ENCODE measurements at regions of chr1 and their contacts with region 1.

Region 1: GRCh38 chr1:226062558-226063223 is at the start of gene H3-3A:
- DNase-seq: peak; percentile 99
- ATAC-seq: peak; percentile 85
- H3K4me3 Mint-ChIP-seq: peak within 1 kb of the TSS; percentile 99
- H3K27ac Mint-ChIP-seq: peak within 1 kb of the TSS; percentile 100
- H3K4me1 Mint-ChIP-seq: peaks cover 26% of the 10 kb centered on the region
- H3K27me3 Mint-ChIP-seq: no peaks in the 10 kb centered on the region
- total RNA-seq, gene H3-3A: 454 to 466 TPM

Region 2: DNA sequence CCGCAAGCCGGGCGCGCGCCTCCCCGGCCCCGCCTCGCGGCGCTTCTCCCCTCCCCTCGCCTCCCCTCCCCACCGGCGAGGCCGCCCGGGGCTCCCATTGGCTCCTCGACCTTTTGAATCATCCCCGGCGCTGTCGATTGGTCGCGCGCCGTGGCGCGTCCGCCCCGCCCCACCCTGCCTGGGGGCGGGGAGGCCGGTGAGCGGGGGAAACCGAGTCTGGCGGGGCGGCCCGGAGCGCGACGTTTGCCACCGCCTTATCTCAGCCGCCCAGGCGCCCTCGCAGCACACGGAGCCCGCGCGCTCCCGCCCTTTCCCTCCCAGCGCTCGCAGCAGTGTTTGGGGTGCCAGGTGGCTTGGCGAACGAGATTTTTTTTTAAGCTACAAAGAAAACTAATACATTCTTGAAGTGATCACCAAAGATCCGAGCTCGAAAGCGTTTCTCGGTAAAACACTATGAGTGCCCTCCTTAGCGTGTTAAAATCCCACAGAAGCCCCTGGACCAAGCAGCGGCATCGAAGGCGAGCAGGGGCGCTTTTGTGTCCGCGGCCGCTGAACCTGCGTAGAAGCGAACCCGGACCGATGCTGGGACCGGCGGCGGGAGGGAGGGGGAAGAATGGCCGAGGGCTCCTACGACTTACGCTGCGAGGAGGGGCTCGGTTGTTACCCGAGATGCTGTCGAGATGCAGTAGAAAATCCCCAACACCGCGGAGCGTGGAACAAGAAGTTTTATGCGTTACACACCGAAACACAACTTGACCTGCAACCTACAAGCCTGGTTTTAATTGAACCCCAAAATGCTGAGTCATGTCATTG is 634.4 kb before region 1 on chr1:
- POLR2A ChIA-PET with region 1: interaction called, 16 read pairs
- DNase-seq: peak; percentile 94
- ATAC-seq: peak; percentile 93
- H3K4me3 Mint-ChIP-seq: peak overlapping the region; percentile 87
- H3K27ac Mint-ChIP-seq: peak overlapping the region; percentile 89
- H3K4me1 Mint-ChIP-seq: peaks cover 43% of the 10 kb centered on the region
- H3K27me3 Mint-ChIP-seq: peaks cover 2% of the 10 kb centered on the region

Region 3: DNA sequence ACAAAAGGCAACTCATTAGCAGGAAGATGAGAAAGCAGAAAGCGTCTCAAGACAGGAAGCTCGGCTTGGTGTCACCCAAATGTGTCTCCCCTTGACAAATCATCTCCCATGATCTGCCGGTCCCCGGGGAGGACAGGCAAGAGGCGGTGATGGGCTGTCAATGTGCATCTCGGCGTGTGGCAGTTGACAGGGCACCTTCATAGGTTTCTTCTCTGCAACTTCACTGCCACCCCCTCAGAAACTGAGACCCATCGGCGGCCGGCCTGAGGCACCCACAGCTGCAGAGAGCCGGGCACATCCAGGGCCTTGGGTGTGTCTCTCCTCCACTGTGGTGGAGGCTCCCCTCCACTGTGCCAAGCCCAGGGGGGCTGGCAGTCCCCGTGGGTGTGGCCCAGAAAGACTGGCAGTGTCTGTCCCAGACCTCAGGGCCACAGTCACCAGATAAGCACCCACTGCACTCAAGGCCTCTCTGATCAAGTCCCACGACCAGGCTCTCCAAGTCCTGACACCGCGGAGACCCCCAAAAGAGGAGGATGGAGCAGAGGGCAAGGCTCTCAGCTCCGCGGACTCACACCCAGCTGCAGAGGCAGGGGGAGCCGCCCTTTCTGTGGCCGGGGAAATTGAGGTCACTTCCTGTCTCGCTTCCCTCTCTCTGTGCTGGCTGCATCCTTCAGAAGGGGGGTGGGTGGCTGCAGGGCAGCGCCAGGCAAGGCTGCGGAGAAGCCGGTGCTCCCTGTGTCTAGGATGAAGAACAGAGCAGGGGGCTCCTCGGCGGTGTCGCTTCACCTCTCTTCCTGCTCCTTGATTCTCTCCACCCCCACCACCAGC is 595.3 kb before region 1 on chr1:
- POLR2A ChIA-PET with region 1: interaction called, 27 read pairs
- DNase-seq: peak; percentile 84
- ATAC-seq: peak; percentile 87
- H3K4me3 Mint-ChIP-seq: peak overlapping the region; percentile 92
- H3K27ac Mint-ChIP-seq: peak overlapping the region; percentile 97
- H3K4me1 Mint-ChIP-seq: peaks cover 24% of the 10 kb centered on the region
- H3K27me3 Mint-ChIP-seq: no peaks in the 10 kb centered on the region

Region 4: GRCh38 chr1:226050133-226050532 is 12.6 kb before region 1 on chr1:
- POLR2A ChIA-PET with region 1: interaction called, 10 read pairs
- DNase-seq: no peak
- ATAC-seq: no peak
- H3K4me3 Mint-ChIP-seq: no peak overlapping the region
- H3K27ac Mint-ChIP-seq: no peak overlapping the region
- H3K4me1 Mint-ChIP-seq: no peaks in the 10 kb centered on the region
- H3K27me3 Mint-ChIP-seq: peaks cover 3% of the 10 kb centered on the region

Region 5: DNA sequence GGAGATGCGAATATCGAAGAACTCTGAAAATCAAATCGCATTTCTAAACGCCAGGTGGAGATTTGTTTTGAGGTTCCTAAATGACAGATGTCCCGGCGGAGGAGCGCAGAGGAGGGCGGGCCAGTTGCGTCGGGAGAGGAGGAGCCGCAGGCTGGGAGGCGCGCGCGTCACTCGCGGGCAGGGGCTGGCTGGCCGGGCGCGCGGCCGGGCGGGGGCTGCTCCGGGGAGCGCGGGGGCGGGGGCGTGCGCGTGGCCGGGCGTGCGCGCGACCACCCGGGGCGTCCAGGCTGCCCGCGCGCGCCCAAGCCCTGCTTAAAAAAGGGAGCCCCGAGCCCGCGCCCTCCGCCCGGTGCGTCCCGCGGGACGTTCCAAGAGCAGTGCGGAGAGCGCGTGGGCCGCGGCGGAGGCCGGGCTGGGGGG is 47.1 kb after region 1 on chr1:
- POLR2A ChIA-PET with region 1: interaction called, 36 read pairs
- DNase-seq: peak; percentile 86
- ATAC-seq: peak; percentile 82
- H3K4me3 Mint-ChIP-seq: peak overlapping the region; percentile 88
- H3K27ac Mint-ChIP-seq: peak overlapping the region; percentile 89
- H3K4me1 Mint-ChIP-seq: peaks cover 8% of the 10 kb centered on the region
- H3K27me3 Mint-ChIP-seq: peaks cover 3% of the 10 kb centered on the region

Region 6: DNA sequence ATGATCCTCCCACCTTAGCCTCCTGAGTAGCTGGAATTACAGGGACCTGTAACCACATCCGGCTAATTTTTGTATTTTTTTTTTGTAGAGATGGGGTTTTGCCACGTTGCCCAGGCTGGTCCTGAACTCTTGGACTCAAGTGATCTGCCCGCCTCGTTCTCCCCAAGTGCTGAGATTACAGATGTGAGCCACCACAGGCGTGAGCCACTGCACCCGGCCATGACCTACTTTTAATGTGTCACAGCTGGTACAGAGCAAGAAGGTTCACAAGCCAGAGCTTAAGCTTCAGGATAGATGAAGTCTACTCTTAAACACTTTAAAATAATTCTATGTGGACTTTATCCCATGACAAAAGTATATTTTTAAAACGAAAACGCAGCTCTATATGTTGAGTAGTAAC is 100.2 kb after region 1 on chr1:
- POLR2A ChIA-PET with region 1: no interaction called
- DNase-seq: no peak
- ATAC-seq: no peak
- H3K4me3 Mint-ChIP-seq: no peak overlapping the region
- H3K27ac Mint-ChIP-seq: no peak overlapping the region
- H3K4me1 Mint-ChIP-seq: peaks cover 16% of the 10 kb centered on the region
- H3K27me3 Mint-ChIP-seq: no peaks in the 10 kb centered on the region

Region 7: DNA sequence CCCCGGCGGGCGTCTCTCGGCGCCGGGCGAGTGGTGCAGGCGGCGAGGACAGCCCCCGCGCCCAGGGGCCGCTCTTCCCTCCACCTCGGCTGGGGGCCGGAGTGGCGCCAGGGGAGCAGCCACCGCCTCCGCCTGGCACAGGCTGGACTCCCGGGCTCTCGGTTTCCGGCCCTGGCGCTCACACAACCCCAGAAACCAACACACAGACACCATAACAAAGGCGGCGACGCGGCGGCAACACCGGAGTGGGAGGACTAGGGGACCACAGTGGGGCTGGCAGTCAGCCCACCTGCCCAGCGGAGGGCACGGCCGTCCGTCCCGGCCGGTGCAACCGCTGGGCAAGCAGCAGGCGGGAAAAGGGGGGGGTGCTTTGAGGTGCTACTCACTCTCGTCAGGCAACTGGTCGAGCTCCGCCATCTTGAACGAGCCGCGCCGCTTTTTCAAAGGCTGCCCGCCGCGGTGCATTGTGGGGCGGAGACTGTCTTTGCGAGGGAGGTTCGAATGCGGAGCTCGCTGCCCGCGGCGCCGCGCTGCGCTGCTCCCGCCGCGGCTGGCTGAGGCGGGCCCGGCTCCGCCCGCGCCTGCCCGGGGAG is 246.1 kb after region 1 on chr1 and contains the start of gene LIN9:
- POLR2A ChIA-PET with region 1: interaction called, 12 read pairs
- DNase-seq: peak; percentile 96
- ATAC-seq: peak; percentile 87
- H3K4me3 Mint-ChIP-seq: peak within 1 kb of the TSS; percentile 90
- H3K27ac Mint-ChIP-seq: peak within 1 kb of the TSS; percentile 92
- H3K4me1 Mint-ChIP-seq: peaks cover 21% of the 10 kb centered on the region
- H3K27me3 Mint-ChIP-seq: peaks cover 18% of the 10 kb centered on the region
- total RNA-seq, gene LIN9: 11.0 to 11.1 TPM